ENCODE measurements at regions of chr1 and their contacts with region 1.

Region 1: GRCh38 chr1:42576935-42577334 is 81.3 kb upstream of the PPIH start:
- DNase-seq: no peak
- ATAC-seq: no peak

Region 2: DNA sequence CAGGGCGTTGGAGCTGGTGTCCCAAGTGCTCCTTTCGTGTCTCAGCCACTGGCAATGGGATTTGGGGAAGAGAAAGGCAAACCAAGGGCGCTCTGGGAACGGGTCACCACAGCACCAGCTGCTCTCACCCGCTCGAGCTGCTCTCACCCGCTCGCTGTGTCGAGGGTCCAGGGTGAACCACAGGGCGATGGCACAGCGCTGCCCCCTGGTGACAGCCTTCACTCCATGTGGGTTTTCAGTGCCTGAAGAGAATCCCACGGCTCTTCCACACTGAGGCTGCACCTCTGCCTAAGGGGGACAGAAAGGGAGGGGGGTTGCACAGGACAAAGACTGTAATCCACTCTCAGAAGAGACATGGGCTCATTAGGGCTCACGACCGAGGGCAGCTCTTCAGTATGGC is 170.2 kb after region 1 on chr1:
- intact Hi-C with region 1: loop called (anchors 5 kb)
- DNase-seq: peak; percentile 72
- ATAC-seq: peak; percentile 77

Measured in Right ventricle myocardium superior (tissue), 1 donor.